MCF 10A (cell line): ENCODE measurements at regions of chr5 and their contacts with region 1.

Region 1: GRCh38 chr5:54217826-54218503 is 92.4 kb downstream of the ARL15 start:
- DNase-seq: peak; percentile 71
- H3K4me3 Mint-ChIP-seq: no peak overlapping the region
- H3K27ac Mint-ChIP-seq: no peak overlapping the region
- H3K4me1 Mint-ChIP-seq: no peaks in the 10 kb centered on the region
- H3K27me3 Mint-ChIP-seq: no peaks in the 10 kb centered on the region
- CTCF ChIP-seq: peak; percentile 56

Region 2: GRCh38 chr5:53170748-53171349 is 1047.1 kb before region 1 on chr5:
- CTCF ChIA-PET with region 1: interaction called, 7 read pairs
- POLR2A ChIA-PET with region 1: no interaction called
- intact Hi-C with region 1: loop called (anchors 2 kb)
- DNase-seq: peak; percentile 63
- H3K4me3 Mint-ChIP-seq: no peak overlapping the region
- H3K27ac Mint-ChIP-seq: no peak overlapping the region
- H3K4me1 Mint-ChIP-seq: peaks cover 5% of the 10 kb centered on the region
- H3K27me3 Mint-ChIP-seq: no peaks in the 10 kb centered on the region
- CTCF ChIP-seq: peak; percentile 77

Region 3: GRCh38 chr5:53874409-53874808 is 343.6 kb before region 1 on chr5:
- CTCF ChIA-PET with region 1: interaction called, 6 read pairs
- POLR2A ChIA-PET with region 1: no interaction called
- intact Hi-C with region 1: loop called (anchors 5 kb)
- DNase-seq: peak; percentile 43
- H3K4me3 Mint-ChIP-seq: no peak overlapping the region
- H3K27ac Mint-ChIP-seq: no peak overlapping the region
- H3K4me1 Mint-ChIP-seq: no peaks in the 10 kb centered on the region
- H3K27me3 Mint-ChIP-seq: no peaks in the 10 kb centered on the region
- CTCF ChIP-seq: no peak

Region 4: DNA sequence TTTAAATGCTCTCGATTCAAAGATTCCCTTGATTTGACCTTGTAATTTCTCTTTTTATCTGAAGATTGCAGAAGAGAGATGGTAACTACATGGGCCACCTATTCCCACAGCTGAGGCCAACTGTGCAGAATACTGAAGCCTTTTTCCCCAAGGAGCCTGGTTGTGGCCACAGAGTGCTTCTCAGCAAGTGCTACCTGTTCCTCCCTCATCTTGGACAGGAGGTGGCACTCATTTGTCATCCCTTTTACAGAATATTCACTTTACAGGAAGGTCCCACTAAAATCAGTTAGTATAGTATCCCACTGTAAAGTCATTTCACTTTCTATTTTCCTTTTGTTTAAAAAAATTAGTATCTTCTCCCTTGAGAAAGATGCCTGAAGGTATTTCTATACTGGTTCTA is 254.0 kb before region 1 on chr5:
- CTCF ChIA-PET with region 1: interaction called, 3 read pairs
- POLR2A ChIA-PET with region 1: no interaction called
- intact Hi-C with region 1: loop called (anchors 1 kb)
- DNase-seq: no peak
- H3K4me3 Mint-ChIP-seq: no peak overlapping the region
- H3K27ac Mint-ChIP-seq: no peak overlapping the region
- H3K4me1 Mint-ChIP-seq: no peaks in the 10 kb centered on the region
- H3K27me3 Mint-ChIP-seq: no peaks in the 10 kb centered on the region
- CTCF ChIP-seq: no peak

Region 5: GRCh38 chr5:54090495-54091084 is 127.4 kb before region 1 on chr5:
- CTCF ChIA-PET with region 1: no interaction called
- POLR2A ChIA-PET with region 1: no interaction called
- intact Hi-C with region 1: loop called (anchors 10 kb)
- DNase-seq: peak; percentile 55
- H3K4me3 Mint-ChIP-seq: no peak overlapping the region
- H3K27ac Mint-ChIP-seq: no peak overlapping the region
- H3K4me1 Mint-ChIP-seq: peaks cover 33% of the 10 kb centered on the region
- H3K27me3 Mint-ChIP-seq: no peaks in the 10 kb centered on the region
- CTCF ChIP-seq: no peak

Region 6: DNA sequence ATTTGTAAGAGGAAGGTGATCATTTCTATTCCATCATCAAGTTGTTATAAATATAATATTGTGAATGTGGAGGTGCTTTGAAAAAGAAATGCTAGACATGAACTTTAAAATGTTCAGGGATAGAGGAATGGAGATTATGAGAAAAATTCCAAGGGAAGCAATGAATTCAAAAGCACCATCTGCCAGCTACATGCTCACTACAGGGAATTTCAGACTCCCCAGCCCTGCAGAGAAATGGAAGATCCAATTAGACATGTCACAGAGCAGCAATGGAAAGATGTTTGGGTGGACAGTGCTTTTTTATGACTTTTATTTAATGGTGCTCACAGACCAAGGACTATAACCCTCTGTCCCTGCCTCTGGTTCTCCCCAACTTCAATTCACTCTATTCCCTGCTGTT is 557.7 kb after region 1 on chr5:
- CTCF ChIA-PET with region 1: no interaction called
- POLR2A ChIA-PET with region 1: no interaction called
- intact Hi-C with region 1: no loop called
- DNase-seq: no peak
- H3K4me3 Mint-ChIP-seq: no peak overlapping the region
- H3K27ac Mint-ChIP-seq: no peak overlapping the region
- H3K4me1 Mint-ChIP-seq: no peaks in the 10 kb centered on the region
- H3K27me3 Mint-ChIP-seq: no peaks in the 10 kb centered on the region
- CTCF ChIP-seq: no peak